K562 (cell line): ENCODE measurements at regions of chr11 and their contacts with region 1.

Region 1: DNA sequence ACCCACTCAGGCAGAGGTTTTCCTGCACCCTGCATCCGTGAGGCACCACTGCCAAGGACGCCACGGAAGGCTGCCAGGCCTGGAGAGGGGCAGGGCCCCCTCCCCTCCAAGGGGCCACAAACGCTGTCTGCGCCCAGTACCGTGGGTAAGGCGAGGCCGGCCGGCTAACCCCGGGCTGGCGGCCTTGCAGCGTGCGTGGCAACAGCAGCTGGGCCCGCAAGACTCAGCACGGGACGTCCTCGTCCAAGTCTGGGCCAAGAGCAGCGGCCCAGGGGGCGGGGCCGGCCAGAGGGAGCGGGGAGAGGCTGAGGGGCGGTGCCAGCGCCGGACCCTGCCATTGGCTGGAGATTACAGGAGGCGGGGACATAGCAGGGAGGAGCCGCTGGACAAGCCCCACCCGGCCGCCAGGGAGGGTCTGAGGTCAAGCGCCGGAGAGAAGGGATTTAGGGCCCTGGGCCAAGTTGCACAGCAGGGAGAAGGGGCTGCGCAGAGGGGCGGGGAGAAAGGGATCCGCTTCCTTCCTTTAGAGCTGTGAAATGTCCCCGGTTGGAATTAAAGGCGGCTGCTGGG is 16.0 kb downstream of the SLC43A1 start:
- DNase-seq: peak; percentile 96 to 100 (median 100)
- ATAC-seq: peak; percentile 99
- H3K4me3 ChIP-seq: peak overlapping the region; percentile 7; the same call in 1 of the 2 replicates
- H3K27ac ChIP-seq: peak overlapping the region; percentile 61; the same call in 2 of the 3 replicates
- H3K4me1 ChIP-seq: peaks cover 16 to 26% of the 10 kb centered on the region in 2 experiments
- H3K27me3 ChIP-seq: no peaks in the 10 kb centered on the region
- CTCF ChIP-seq: no peak
- EP300 ChIP-seq: no peak
- POLR2A ChIP-seq: no peak
- RAD21 ChIP-seq: no peak

Region 2: DNA sequence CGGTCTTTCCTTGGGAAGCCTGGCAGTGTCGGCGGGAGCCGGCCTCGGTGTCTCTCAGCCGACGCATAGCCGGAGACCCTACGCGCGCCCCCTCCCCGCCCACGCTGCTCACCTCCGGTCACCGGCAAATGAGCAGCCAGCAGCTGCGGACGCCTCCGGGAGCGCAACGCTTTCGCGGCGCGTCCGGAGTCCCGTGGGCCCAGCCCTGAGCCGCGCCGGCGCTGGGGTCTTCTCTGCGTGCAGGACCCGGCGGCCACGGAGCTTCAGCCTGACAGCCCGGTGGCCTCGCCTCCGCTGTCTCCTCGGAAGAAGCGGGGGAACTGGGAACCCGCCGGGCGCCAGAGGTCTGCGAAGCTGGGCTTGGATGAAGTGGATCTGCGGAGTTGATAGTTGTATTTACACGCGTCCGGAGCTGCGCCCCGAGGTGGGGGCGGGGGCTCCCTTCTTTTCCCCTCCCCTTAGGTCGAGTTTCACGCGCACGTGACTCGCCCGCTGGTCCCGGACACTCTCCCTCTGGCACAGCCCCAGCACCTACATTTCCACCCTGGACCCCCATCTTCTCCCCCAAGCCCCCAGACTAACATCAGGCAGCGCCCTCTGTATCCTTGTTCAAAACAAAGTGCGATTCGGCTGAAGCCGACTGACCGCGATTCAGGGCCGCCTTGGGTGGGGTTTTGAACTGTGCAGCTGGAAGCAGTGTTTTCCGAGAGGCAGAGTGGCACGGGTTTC is 16.0 kb after region 1 on chr11 and contains the start of gene SLC43A1:
- CTCF ChIA-PET with region 1: no interaction called
- POLR2A ChIA-PET with region 1: interaction called, 25 read pairs
- in situ Hi-C with region 1: no loop called
- intact Hi-C with region 1: loop called (anchors 1 kb)
- DNase-seq: peak; percentile 81 to 85 (median 83)
- ATAC-seq: peak; percentile 82
- H3K4me3 ChIP-seq: peak within 1 kb of the TSS; percentile 88
- H3K27ac ChIP-seq: peak within 1 kb of the TSS; percentile 86
- H3K4me1 ChIP-seq: peaks cover 21 to 31% of the 10 kb centered on the region in 2 experiments; a peak in 4 of 5 replicates
- H3K27me3 ChIP-seq: no peaks in the 10 kb centered on the region
- CTCF ChIP-seq: 0 out of 6 replicates have a peak, but pooled peaks of 1 of the 3 experiments have one; percentile 5
- EP300 ChIP-seq: no peak
- POLR2A ChIP-seq: peak; percentile 77
- RAD21 ChIP-seq: no peak; a peak in 1 of 4 replicates
- polyA plus RNA-seq, gene SLC43A1: 2.6 to 3.8 TPM

Region 3: GRCh38 chr11:57735619-57736298 is 236.3 kb after region 1 on chr11:
- CTCF ChIA-PET with region 1: no interaction called
- POLR2A ChIA-PET with region 1: no interaction called
- in situ Hi-C with region 1: no loop called
- intact Hi-C with region 1: no loop called
- DNase-seq: peak in 2 of 4 experiments; percentile 62 to 84
- ATAC-seq: peak; percentile 92
- H3K4me3 ChIP-seq: no peak overlapping the region
- H3K27ac ChIP-seq: peak overlapping the region; percentile 81
- H3K4me1 ChIP-seq: peaks cover 15 to 21% of the 10 kb centered on the region in 2 experiments
- H3K27me3 ChIP-seq: no peaks in the 10 kb centered on the region
- CTCF ChIP-seq: no peak
- EP300 ChIP-seq: peak; percentile 77
- POLR2A ChIP-seq: 0 out of 2 replicates have a peak, but pooled peaks have one; percentile 36
- RAD21 ChIP-seq: no peak